Ovary (tissue), 10 donors: ENCODE measurements at regions of chr14 and their contacts with region 1.

Region 1: DNA sequence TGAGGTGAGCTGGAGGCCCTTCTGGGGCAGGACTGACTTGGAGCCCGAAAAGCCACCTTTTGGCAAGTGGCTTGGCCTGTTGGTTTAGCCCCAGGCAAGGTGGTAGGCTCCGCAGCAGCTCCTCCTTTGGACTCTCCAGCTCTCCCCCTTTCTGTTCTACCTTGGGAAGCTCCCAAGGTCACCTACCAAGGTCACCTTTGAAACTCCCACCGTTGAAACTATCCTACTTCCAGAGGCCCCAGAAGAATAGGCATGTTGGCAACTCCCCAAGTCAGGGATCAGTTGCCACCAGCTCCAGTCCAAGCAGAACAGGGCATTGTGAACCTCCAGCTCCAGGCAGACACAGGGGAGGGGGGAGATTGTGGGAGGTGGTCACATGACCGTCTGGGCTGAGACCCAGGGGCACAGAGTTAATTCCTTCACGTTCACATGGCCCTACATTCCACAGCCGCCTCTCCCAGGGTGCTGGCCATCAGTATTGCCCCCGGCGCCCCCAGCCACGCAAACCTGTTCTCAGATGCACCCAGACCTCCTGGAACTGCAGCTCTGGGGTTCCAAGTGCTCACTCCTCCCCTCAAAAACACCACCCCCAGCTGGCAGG is 14.4 kb downstream of the IRF2BPL start:
- DNase-seq: peak; percentile 74 to 87 (median 81)
- H3K4me3 ChIP-seq: no peak overlapping the region
- H3K27ac ChIP-seq: peak overlapping the region in 1 of 2 donors; percentile 29
- H3K4me1 ChIP-seq: peaks cover 11% of the 10 kb centered on the region
- H3K27me3 ChIP-seq: no peaks in the 10 kb centered on the region
- CTCF ChIP-seq: no peak
- EP300 ChIP-seq: no peak
- POLR2A ChIP-seq: no peak

Region 2: DNA sequence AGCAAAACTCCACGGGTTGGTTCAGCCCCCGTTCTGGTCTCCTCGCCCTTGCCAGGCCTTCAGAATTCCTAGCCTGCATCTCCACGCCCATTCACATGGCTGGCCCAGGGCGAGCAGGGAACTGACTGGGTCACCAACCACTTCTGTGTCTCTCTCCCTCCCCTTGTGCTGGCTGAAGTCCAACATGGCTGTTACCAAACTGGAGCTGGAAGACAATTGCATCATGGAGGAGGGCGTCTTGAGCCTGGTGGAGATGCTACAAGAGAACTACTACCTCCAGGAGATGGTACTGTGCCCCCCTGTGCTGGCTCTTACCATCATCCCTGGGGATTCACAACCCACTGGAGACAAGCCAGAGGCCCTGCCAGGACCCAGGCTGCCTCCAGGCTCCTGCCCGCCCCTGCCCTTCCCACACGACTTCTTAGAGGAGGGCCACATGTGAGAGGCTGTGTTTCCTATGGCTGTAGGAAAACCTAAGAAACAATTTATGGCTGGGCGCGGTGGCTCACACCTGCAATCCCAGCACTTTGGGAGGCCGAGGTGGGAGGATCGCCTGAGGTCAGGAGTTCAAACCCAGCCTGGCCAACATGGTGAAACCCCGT is 178.0 kb before region 1 on chr14:
- intact Hi-C with region 1: no loop called
- DNase-seq: peak in 2 of 5 donors; percentile 25 to 33
- H3K4me3 ChIP-seq: no peak overlapping the region
- H3K27ac ChIP-seq: no peak overlapping the region
- H3K4me1 ChIP-seq: peaks cover 5% of the 10 kb centered on the region
- H3K27me3 ChIP-seq: no peaks in the 10 kb centered on the region
- CTCF ChIP-seq: no peak
- EP300 ChIP-seq: no peak
- POLR2A ChIP-seq: no peak

Region 3: GRCh38 chr14:76968621-76969063 is 45.5 kb before region 1 on chr14:
- intact Hi-C with region 1: loop called in 3 of 4 experiments (anchors 5 kb)
- DNase-seq: no peak
- H3K4me3 ChIP-seq: no peak overlapping the region
- H3K27ac ChIP-seq: no peak overlapping the region
- H3K4me1 ChIP-seq: no peaks in the 10 kb centered on the region
- H3K27me3 ChIP-seq: no peaks in the 10 kb centered on the region
- CTCF ChIP-seq: no peak
- EP300 ChIP-seq: no peak
- POLR2A ChIP-seq: no peak

Region 4: GRCh38 chr14:77043177-77043983 is 29.3 kb after region 1 on chr14:
- intact Hi-C with region 1: no loop called
- DNase-seq: peak; percentile 60 to 74 (median 69)
- H3K4me3 ChIP-seq: peak overlapping the region; percentile 12
- H3K27ac ChIP-seq: peak overlapping the region; percentile 62 to 92
- H3K4me1 ChIP-seq: peaks cover 33% of the 10 kb centered on the region
- H3K27me3 ChIP-seq: no peaks in the 10 kb centered on the region
- CTCF ChIP-seq: no peak
- EP300 ChIP-seq: peak; percentile 96
- POLR2A ChIP-seq: no peak